ENCODE measurements at regions of chr17 and their contacts with region 1.

Region 1: GRCh38 chr17:2386400-2387085 is 14.3 kb downstream of the MNT start:
- DNase-seq: no peak
- H3K4me3 Mint-ChIP-seq: no peak overlapping the region
- H3K27ac Mint-ChIP-seq: no peak overlapping the region
- H3K4me1 Mint-ChIP-seq: peaks cover 24% of the 10 kb centered on the region
- H3K27me3 Mint-ChIP-seq: no peaks in the 10 kb centered on the region

Region 2: DNA sequence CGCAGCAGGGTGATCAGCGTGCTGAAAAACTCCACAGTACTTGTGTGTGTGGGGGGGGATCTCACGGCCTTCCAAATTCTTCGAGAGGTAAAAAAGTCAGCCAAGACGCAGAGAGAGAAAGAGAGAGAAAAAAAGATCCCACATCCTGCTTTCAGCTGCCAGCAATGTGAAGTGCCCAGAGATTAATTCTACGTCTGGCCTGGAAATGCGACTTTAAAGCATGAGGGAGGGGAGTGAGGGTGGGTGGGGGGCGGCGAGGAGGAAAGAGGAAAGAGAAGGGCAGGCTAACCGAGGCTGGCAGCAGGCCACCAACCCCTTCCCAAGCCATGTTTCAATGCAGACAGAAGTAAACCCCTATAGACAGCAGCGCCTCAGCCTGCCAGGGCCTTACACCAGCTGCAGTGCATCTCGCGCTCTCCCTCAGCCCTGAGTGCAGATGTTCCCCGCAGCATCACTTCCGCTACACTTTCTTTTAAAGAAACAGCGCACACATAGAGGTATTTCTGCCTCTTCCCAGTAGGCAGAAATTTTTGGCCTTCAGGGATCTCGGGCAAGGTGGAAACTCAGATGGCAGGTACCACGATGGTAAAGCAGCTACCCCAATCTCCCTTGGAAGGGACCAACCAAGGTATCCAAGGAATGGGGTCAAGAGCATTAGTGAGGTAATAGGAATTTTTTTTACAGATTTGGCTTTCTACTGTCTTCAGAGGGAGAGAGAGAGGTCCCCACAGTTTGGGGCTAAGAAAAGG is 170.8 kb before region 1 on chr17:
- CTCF ChIA-PET with region 1: no interaction called
- POLR2A ChIA-PET with region 1: no interaction called
- intact Hi-C with region 1: no loop called
- DNase-seq: peak; percentile 82
- H3K4me3 Mint-ChIP-seq: peak overlapping the region; percentile 74
- H3K27ac Mint-ChIP-seq: peak overlapping the region; percentile 91
- H3K4me1 Mint-ChIP-seq: peaks cover 54% of the 10 kb centered on the region
- H3K27me3 Mint-ChIP-seq: no peaks in the 10 kb centered on the region

Region 3: DNA sequence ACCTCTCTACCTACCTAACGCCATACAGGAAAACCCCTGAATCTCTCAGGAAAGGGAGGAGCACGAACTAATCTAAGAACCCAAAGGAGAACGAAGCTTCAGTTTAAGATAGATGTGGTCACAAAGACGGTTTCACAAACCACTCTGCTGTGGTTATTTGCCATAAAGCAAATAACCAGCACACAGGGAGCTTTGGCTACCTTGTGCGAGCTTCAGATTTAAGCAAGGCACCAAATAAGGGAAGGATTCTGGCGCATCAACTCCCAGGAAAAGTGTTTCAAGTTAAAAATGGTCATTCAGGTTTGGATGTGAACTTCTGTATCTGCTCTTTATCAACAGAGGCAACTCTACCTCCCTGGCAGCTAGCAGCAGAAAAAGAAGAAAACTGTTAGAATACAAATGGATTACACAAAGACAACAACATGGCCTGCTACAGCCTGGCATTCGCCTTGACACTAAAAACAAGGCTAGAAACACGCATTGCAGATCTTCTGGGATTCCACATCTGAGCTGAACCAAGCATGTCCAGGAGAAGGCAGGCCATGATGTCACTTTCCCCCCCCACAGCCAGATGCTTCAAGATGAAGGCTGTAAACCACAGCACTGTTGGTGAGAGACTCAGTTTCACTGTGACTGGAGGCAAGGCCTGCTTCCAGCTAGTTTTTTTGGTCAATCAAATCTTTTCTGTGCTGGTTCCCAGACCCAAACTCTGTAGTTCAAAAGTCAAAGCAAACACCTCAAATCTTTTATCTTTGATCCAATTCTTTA is 126.6 kb before region 1 on chr17:
- CTCF ChIA-PET with region 1: no interaction called
- POLR2A ChIA-PET with region 1: no interaction called
- intact Hi-C with region 1: no loop called
- DNase-seq: peak; percentile 90
- H3K4me3 Mint-ChIP-seq: peak overlapping the region; percentile 65
- H3K27ac Mint-ChIP-seq: peak overlapping the region; percentile 93
- H3K4me1 Mint-ChIP-seq: peaks cover 72% of the 10 kb centered on the region
- H3K27me3 Mint-ChIP-seq: no peaks in the 10 kb centered on the region

Region 4: DNA sequence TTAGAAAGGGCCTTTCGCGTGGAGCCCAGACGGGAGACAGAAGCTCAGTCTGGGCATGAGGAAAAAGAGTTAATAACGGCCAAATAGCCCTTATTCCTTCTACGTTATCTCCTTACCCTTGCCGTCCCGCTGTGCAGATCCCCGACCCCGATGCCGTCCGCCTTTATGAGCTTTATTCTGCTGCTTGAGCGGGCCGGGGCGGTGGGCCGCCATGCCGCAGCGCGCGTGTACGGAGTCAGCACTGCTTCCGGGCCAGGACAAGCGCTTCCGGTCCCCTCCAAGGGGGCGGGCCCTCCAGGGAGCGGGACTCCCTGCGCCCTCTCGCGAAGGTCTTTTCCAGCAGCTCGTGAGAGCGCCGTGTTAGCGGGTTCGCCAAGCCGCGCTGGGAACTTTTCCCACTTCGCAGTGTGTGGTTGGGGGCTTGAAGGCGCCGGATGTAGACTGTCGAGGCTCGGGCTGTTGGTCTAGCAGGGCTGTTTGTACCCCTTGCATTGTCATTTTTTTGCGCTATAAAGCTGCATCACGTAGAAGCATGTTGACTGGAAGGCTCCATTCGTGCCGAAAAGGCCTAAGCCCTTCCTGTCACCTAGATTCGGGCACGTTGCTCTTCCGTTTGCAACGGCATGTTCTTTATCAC is 50.2 kb before region 1 on chr17 and contains the start of gene TSR1:
- CTCF ChIA-PET with region 1: interaction called, 14 read pairs
- POLR2A ChIA-PET with region 1: no interaction called
- intact Hi-C with region 1: loop called (anchors 5 kb)
- DNase-seq: peak; percentile 94
- H3K4me3 Mint-ChIP-seq: peak within 1 kb of the TSS; percentile 100
- H3K27ac Mint-ChIP-seq: peak within 1 kb of the TSS; percentile 90
- H3K4me1 Mint-ChIP-seq: peaks cover 14% of the 10 kb centered on the region
- H3K27me3 Mint-ChIP-seq: no peaks in the 10 kb centered on the region
- total RNA-seq, gene TSR1: 55.1 to 55.9 TPM

Region 5: GRCh38 chr17:2361010-2361760 is 25.4 kb before region 1 on chr17:
- CTCF ChIA-PET with region 1: interaction called, 12 read pairs
- POLR2A ChIA-PET with region 1: no interaction called
- intact Hi-C with region 1: no loop called
- DNase-seq: no peak
- H3K4me3 Mint-ChIP-seq: no peak overlapping the region
- H3K27ac Mint-ChIP-seq: no peak overlapping the region
- H3K4me1 Mint-ChIP-seq: no peaks in the 10 kb centered on the region
- H3K27me3 Mint-ChIP-seq: no peaks in the 10 kb centered on the region

Region 6: DNA sequence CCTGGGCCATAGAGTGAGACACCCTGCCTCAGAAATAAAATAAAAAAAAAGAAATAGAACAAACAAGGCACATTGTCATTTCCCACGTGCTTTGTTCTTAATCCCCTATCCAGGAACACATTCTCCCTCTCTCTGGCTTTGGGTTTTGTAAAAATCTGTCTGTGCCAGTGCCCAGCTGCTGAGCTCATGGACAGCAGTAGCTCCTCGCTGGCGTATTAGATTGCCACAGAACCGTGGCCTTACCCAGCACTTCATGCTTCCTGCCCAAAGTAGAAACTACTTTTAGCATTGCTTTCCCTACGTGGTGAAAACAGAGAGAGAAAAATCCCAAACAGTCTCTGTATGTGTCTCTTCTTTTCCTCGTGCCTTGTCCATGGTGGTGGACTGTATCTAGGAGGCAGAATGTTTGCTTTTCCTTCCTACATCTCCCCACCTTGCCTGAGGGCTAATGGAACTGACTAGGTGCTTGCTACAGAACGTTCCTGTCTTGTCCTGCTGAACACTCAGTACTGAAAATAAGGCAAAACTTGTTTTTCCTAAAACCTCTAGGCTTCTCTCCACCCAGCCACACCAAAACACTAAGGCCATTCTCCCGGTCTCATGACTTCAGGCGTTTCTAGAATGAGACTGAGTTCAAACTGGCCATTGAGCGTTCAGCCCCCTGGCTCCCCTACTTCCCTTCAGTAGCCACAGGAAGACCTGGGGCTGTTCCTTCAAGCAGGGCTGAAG is 11.8 kb before region 1 on chr17:
- CTCF ChIA-PET with region 1: interaction called, 22 read pairs
- POLR2A ChIA-PET with region 1: no interaction called
- intact Hi-C with region 1: no loop called
- DNase-seq: no peak
- H3K4me3 Mint-ChIP-seq: no peak overlapping the region
- H3K27ac Mint-ChIP-seq: no peak overlapping the region
- H3K4me1 Mint-ChIP-seq: no peaks in the 10 kb centered on the region
- H3K27me3 Mint-ChIP-seq: no peaks in the 10 kb centered on the region

Region 7: GRCh38 chr17:2416010-2416734 is 29.6 kb after region 1 on chr17:
- CTCF ChIA-PET with region 1: interaction called, 544 read pairs
- POLR2A ChIA-PET with region 1: interaction called, 14 read pairs
- intact Hi-C with region 1: loop called (anchors 1 kb)
- DNase-seq: peak; percentile 91
- H3K4me3 Mint-ChIP-seq: no peak overlapping the region
- H3K27ac Mint-ChIP-seq: no peak overlapping the region
- H3K4me1 Mint-ChIP-seq: peaks cover 3% of the 10 kb centered on the region
- H3K27me3 Mint-ChIP-seq: no peaks in the 10 kb centered on the region

Measured in activated CD4-positive, alpha-beta memory T cell treated with anti-CD3 and anti-CD28 coated beads for 36 hours (primary cell).